Heart right ventricle (tissue), 16 donors: ENCODE measurements at regions of chr5 and their contacts with region 1.

Region 1: GRCh38 chr5:154038707-154039457 is at the starts of genes FAM114A2 and MFAP3:
- DNase-seq: peak; percentile 88 to 91
- ATAC-seq: peak; percentile 97 to 100 (median 99)
- H3K4me3 ChIP-seq: peak within 1 kb of the TSS; percentile 63 to 92 (median 76)
- H3K27ac ChIP-seq: peak within 1 kb of the TSS; percentile 59 to 96 (median 88)
- H3K4me1 ChIP-seq: peaks cover 0 to 66% (median 57%) of the 10 kb centered on the region in 9 donors
- H3K27me3 ChIP-seq: no peaks in the 10 kb centered on the region
- CTCF ChIP-seq: peak in 1 of 9 donors; percentile 9
- total RNA-seq, gene FAM114A2: 25.5 to 47.5 (median 36.5) TPM
- total RNA-seq, gene MFAP3: 23.2 to 44.3 (median 34.1) TPM

Region 2: DNA sequence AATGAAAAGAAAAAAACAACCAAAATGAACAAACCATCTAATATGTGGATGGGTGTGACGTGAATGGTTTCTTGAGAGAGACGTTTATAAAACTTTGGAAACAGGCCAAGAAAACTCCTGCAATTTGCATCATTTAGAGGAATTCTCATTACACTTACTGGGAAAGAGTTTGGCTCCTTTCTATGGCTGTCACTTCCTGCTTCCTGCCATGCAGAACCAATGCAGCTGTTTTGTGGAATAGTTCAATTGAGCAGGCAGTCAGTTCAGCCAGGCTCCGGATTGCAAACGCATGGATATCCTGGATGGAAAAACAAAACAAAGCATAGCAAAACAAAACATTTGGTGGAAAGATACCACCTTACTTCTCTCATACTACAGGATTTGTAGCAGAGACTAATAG is 36.8 kb before region 1 on chr5:
- intact Hi-C with region 1: loop called in 4 of 10 experiments (anchors 5 kb)
- DNase-seq: peak in 1 of 2 donors; percentile 80
- ATAC-seq: peak; percentile 85 to 97 (median 94)
- H3K4me3 ChIP-seq: peak overlapping the region in 1 of 10 donors; percentile 21
- H3K27ac ChIP-seq: peak overlapping the region; percentile 60 to 93 (median 82)
- H3K4me1 ChIP-seq: peaks cover 0 to 27% (median 18%) of the 10 kb centered on the region in 9 donors
- H3K27me3 ChIP-seq: no peaks in the 10 kb centered on the region
- CTCF ChIP-seq: no peak